ENCODE measurements at regions of chr12 and their contacts with region 1.

Region 1: DNA sequence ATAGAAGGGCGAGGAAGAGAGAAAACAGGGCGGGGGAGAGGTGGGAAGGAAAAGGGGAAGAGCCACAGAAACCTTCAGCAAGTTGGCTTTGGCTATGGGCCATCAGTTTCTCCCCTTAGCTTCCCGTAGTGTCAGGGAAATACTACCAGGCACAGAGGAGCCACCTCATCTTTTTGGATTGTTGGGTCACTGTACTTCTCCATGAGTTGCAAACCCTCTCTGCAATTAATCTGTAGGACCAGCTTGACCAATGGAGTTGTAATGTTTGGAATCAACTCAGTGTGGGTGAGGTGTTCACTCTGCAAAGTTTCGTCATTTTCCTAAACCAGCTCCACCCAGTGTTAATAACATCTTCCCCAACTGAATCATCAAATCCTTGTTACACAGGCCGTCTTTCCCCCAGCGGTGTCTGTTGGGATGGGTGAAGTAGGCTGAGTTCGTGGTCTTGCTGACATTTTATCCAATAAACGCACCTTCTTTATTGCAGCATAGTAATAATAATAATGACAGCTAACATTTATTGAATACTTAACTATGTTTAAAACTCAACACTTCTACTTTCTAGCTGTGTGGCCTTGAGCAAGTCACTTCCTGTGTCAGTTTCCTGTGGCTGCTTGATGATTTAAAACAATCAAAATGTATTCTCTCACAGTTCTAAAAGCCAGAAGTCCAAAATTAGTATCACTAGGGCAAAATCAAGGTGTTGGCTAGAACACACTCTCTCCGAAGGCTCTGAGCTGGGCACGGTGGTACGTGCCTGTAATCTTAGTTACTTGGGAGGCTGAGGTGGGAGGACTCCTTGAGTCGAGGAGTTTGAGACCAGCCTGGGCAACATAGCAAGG is 8.1 kb upstream of the GLTP start:
- DNase-seq: peak; percentile 94
- H3K4me3 Mint-ChIP-seq: peak overlapping the region; percentile 23
- H3K27ac Mint-ChIP-seq: peak overlapping the region; percentile 97
- H3K4me1 Mint-ChIP-seq: peaks cover 35% of the 10 kb centered on the region
- H3K27me3 Mint-ChIP-seq: no peaks in the 10 kb centered on the region
- CTCF ChIP-seq: peak; percentile 7

Region 2: DNA sequence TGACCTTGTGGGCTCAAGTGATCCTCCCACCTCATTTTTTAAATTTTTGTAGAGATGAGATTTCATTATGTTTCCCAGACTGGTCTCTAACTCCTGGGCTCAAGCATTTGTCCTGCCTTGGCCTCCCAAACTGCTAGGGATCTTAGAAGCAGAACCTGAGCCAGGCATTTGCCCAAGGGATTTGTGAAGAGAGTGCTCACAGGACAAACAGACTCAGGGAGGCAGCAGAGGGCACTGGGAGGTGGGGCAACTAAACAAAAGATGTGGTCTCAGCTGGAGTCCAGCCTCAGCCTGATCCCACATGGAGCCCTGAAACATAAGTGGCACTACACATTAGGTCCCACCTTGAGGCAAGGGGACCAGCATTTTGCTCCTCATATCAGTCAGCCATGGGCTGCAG is 1463.1 kb before region 1 on chr12:
- CTCF ChIA-PET with region 1: no interaction called
- POLR2A ChIA-PET with region 1: no interaction called
- intact Hi-C with region 1: no loop called
- DNase-seq: peak; percentile 22
- H3K4me3 Mint-ChIP-seq: no peak overlapping the region
- H3K27ac Mint-ChIP-seq: no peak overlapping the region
- H3K4me1 Mint-ChIP-seq: no peaks in the 10 kb centered on the region
- H3K27me3 Mint-ChIP-seq: no peaks in the 10 kb centered on the region
- CTCF ChIP-seq: no peak

Region 3: DNA sequence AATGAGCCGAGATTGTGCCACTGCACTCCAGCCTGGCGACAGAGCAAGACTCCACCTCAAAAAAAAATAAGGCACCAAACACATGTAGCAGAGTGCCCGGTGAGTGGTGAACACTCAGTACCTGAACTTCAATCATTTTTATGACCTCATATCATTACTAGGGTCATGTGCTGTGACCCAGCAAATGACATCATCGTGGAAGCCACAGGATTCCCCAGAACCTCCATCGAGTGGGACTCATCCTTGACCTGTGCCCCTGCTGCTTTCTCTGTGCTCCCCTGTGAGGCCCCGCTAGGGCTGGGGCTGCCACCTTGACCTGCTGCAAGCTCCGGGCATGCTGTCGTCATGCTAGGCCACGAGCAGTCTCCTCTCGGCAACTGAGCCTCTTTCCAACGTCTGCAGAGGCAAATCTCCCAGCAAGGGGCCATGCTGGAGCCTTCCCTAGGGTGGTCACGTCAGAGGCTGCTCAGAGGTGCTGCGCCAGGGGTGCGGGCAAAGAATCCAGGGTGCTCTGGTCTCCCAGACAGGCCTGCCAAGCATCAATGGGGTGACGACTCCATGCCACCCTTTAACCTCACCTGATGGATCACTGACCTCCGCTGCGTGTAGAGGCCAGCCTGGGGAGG is 26.6 kb before region 1 on chr12:
- CTCF ChIA-PET with region 1: no interaction called
- POLR2A ChIA-PET with region 1: no interaction called
- intact Hi-C with region 1: no loop called
- DNase-seq: no peak
- H3K4me3 Mint-ChIP-seq: no peak overlapping the region
- H3K27ac Mint-ChIP-seq: no peak overlapping the region
- H3K4me1 Mint-ChIP-seq: peaks cover 5% of the 10 kb centered on the region
- H3K27me3 Mint-ChIP-seq: no peaks in the 10 kb centered on the region
- CTCF ChIP-seq: no peak

Region 4: GRCh38 chr12:109899783-109900751 is 11.7 kb after region 1 on chr12 and contains the start of gene TCHP:
- CTCF ChIA-PET with region 1: interaction called, 11 read pairs
- POLR2A ChIA-PET with region 1: interaction called, 45 read pairs
- intact Hi-C with region 1: no loop called
- DNase-seq: peak; percentile 86
- H3K4me3 Mint-ChIP-seq: peak within 1 kb of the TSS; percentile 98
- H3K27ac Mint-ChIP-seq: peak within 1 kb of the TSS; percentile 97
- H3K4me1 Mint-ChIP-seq: peaks cover 20% of the 10 kb centered on the region
- H3K27me3 Mint-ChIP-seq: no peaks in the 10 kb centered on the region
- CTCF ChIP-seq: peak; percentile 26
- total RNA-seq, gene TCHP: 26.4 and 36.3 TPM in 2 replicates